Breast epithelium (tissue), 4 donors: ENCODE measurements at regions of chr20 and their contacts with region 1.

Region 1: GRCh38 chr20:14422912-14423311 is 85.5 kb upstream of the FLRT3 start:
- DNase-seq: no peak
- H3K4me3 ChIP-seq: no peak overlapping the region
- H3K27ac ChIP-seq: no peak overlapping the region
- H3K4me1 ChIP-seq: no peaks in the 10 kb centered on the region
- H3K27me3 ChIP-seq: no peaks in the 10 kb centered on the region
- CTCF ChIP-seq: no peak
- POLR2A ChIP-seq: no peak

Region 2: GRCh38 chr20:13231031-13231752 is 1191.7 kb before region 1 on chr20:
- intact Hi-C with region 1: loop called (anchors 10 kb)
- DNase-seq: no peak
- H3K4me3 ChIP-seq: no peak overlapping the region
- H3K27ac ChIP-seq: no peak overlapping the region
- H3K4me1 ChIP-seq: no peaks in the 10 kb centered on the region
- H3K27me3 ChIP-seq: no peaks in the 10 kb centered on the region
- CTCF ChIP-seq: no peak
- POLR2A ChIP-seq: no peak

Region 3: GRCh38 chr20:14538433-14538832 is 115.5 kb after region 1 on chr20:
- intact Hi-C with region 1: no loop called
- DNase-seq: no peak
- H3K4me3 ChIP-seq: no peak overlapping the region
- H3K27ac ChIP-seq: no peak overlapping the region
- H3K4me1 ChIP-seq: no peaks in the 10 kb centered on the region
- H3K27me3 ChIP-seq: no peaks in the 10 kb centered on the region
- CTCF ChIP-seq: no peak
- POLR2A ChIP-seq: no peak